Activated T-helper 2 cell treated with anti-CD3 and anti-CD28 coated beads, Interferon-gamma antibody, Interleukin-2, Interleukin-4, amounts not matched to agents 10 μg/mL and 5 μg/mL and 100 μg/mL, durations not matched to agents 14 hours and 24 hours and 36 hours (primary cell): ENCODE measurements at regions of chr5 and their contacts with region 1.

Region 1: DNA sequence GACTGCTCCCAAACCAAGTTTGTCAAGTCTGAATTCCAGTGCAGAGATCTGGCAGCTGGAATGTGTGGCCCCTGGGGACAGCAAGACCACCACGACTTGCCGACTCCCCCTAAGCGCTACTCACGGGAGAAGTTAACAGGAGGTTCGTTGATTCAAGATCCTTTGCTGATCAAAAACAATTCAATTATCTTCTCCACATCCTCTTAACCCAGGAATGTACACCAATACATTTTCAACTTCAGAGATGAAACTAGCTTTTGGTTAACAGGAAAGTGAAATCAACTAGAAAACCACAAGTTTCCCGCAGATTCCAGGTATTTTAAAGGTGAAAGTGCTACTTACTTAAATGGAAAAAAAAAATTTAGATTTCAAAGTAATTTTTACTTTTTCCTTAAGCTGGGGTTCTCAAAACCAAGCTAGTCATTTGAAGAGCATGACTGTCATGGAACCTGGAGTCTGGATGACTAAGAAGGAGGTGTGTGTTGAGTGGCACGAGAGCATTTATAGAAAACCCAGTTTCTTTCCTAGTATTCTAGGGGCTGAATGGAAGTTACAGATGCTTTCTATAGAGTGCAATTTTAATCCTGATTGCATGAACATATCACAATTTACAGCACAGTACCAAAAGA is 257.5 kb upstream of the PANK3 start:
- DNase-seq: no peak
- H3K4me3 Mint-ChIP-seq: peak overlapping the region; percentile 81
- H3K27ac Mint-ChIP-seq: peak overlapping the region; percentile 94
- H3K4me1 Mint-ChIP-seq: peaks cover 53% of the 10 kb centered on the region
- H3K27me3 Mint-ChIP-seq: no peaks in the 10 kb centered on the region

Region 2: GRCh38 chr5:168519643-168520042 is 317.1 kb before region 1 on chr5:
- intact Hi-C with region 1: no loop called
- DNase-seq: no peak
- H3K4me3 Mint-ChIP-seq: no peak overlapping the region
- H3K27ac Mint-ChIP-seq: no peak overlapping the region
- H3K4me1 Mint-ChIP-seq: no peaks in the 10 kb centered on the region
- H3K27me3 Mint-ChIP-seq: no peaks in the 10 kb centered on the region

Region 3: GRCh38 chr5:168747987-168748777 is 88.5 kb before region 1 on chr5:
- intact Hi-C with region 1: loop called (anchors 1 kb)
- DNase-seq: peak; percentile 51
- H3K4me3 Mint-ChIP-seq: no peak overlapping the region
- H3K27ac Mint-ChIP-seq: peak overlapping the region; percentile 76
- H3K4me1 Mint-ChIP-seq: peaks cover 13% of the 10 kb centered on the region
- H3K27me3 Mint-ChIP-seq: no peaks in the 10 kb centered on the region

Region 4: GRCh38 chr5:168793841-168794837 is 42.6 kb before region 1 on chr5:
- intact Hi-C with region 1: loop called (anchors 1 kb)
- DNase-seq: no peak
- H3K4me3 Mint-ChIP-seq: no peak overlapping the region
- H3K27ac Mint-ChIP-seq: peak overlapping the region; percentile 95
- H3K4me1 Mint-ChIP-seq: peaks cover 56% of the 10 kb centered on the region
- H3K27me3 Mint-ChIP-seq: no peaks in the 10 kb centered on the region

Region 5: GRCh38 chr5:168822745-168823281 is 13.9 kb before region 1 on chr5:
- intact Hi-C with region 1: loop called (anchors 1 kb)
- DNase-seq: no peak
- H3K4me3 Mint-ChIP-seq: peak overlapping the region; percentile 65
- H3K27ac Mint-ChIP-seq: peak overlapping the region; percentile 94
- H3K4me1 Mint-ChIP-seq: peaks cover 33% of the 10 kb centered on the region
- H3K27me3 Mint-ChIP-seq: no peaks in the 10 kb centered on the region

Region 6: GRCh38 chr5:168941901-168942300 is 105.2 kb after region 1 on chr5:
- intact Hi-C with region 1: loop called (anchors 5 kb)
- DNase-seq: no peak
- H3K4me3 Mint-ChIP-seq: no peak overlapping the region
- H3K27ac Mint-ChIP-seq: no peak overlapping the region
- H3K4me1 Mint-ChIP-seq: peaks cover 21% of the 10 kb centered on the region
- H3K27me3 Mint-ChIP-seq: no peaks in the 10 kb centered on the region